A549 (cell line): ENCODE measurements at regions of chr17 and their contacts with region 1.

Region 1: DNA sequence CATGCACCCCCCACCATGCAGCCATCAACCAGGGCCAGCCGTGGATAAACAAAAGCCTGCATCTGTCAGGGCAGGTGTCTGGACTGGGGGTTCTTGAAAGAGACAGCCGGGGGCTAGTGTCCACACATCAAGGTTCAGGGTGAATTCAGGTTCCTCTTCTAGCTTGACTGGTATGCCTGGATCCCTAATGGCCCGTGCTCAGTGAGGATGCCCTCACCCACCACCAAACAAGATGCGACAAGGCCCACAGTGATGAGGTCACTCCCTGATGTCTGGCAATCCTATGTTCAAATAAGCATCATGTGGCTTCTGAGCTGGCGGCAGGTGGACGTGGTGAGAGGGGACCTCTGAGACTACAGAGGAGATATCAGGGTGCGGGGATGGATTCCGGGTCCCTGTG is 64.6 kb downstream of the GOSR1 start:
- DNase-seq: no peak
- ATAC-seq: no peak
- H3K4me3 ChIP-seq: no peak overlapping the region
- H3K27ac ChIP-seq: no peak overlapping the region
- H3K4me1 ChIP-seq: no peaks in the 10 kb centered on the region
- CTCF ChIP-seq: no peak
- EP300 ChIP-seq: no peak
- POLR2A ChIP-seq: no peak
- RAD21 ChIP-seq: no peak

Region 2: DNA sequence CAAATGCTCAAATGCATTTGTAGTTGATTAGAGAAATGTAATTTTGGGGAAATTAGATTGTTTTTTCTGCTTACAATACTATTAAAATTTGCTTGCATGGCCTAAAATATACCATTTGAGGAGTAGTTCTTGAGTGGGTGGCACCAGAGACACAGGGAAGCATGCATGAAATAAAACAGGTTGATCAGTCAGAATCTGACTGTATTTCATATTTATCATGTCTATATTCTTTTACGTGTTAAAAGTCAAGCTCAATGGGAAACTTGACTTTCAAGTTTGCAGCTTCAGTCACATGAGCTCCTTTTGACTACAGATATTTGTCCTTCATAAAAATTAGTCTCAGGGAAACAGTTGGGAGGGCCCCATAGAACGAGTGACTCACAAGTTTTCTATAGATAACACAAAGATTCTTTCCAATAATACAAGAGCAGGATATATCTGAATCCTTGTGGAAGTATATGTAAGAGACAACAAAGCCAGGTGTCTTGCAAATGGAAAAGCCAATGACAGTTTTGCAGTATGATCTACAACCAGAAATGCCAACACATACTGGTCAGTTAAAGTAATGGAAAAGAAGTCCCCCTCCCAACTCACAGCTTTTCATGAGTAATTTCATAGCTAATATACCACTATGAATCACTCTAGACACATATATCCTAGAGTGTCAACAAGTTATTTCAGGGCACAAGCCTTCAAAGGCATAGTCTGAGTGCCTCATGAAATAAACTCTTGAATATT is 876.9 kb before region 1 on chr17:
- CTCF ChIA-PET with region 1: no interaction called
- POLR2A ChIA-PET with region 1: no interaction called
- DNase-seq: peak; percentile 22 to 29
- ATAC-seq: peak in 1 of 2 experiments; percentile 75; a peak in 3 of 6 replicates
- H3K4me3 ChIP-seq: no peak overlapping the region
- H3K27ac ChIP-seq: 0 out of 6 replicates have a peak overlapping the region, but pooled peaks of 1 of the 2 experiments have one; percentile 12
- H3K4me1 ChIP-seq: peaks cover 30% of the 10 kb centered on the region
- CTCF ChIP-seq: no peak
- EP300 ChIP-seq: no peak
- POLR2A ChIP-seq: no peak
- RAD21 ChIP-seq: no peak

Region 3: GRCh38 chr17:30291543-30292285 is 250.1 kb before region 1 on chr17 and contains the start of gene BLMH:
- CTCF ChIA-PET with region 1: no interaction called
- POLR2A ChIA-PET with region 1: no interaction called
- DNase-seq: peak; percentile 79 to 80
- ATAC-seq: peak; percentile 86 to 93
- H3K4me3 ChIP-seq: peak within 1 kb of the TSS; percentile 80
- H3K27ac ChIP-seq: peak within 1 kb of the TSS; percentile 82 to 92
- H3K4me1 ChIP-seq: peaks cover 10% of the 10 kb centered on the region
- CTCF ChIP-seq: no peak
- EP300 ChIP-seq: no peak
- POLR2A ChIP-seq: peak; percentile 86
- RAD21 ChIP-seq: peak in 1 of 2 experiments; percentile 14; a peak in 1 of 5 replicates
- polyA plus RNA-seq, gene BLMH: 36.4 and 38.5 TPM in 2 replicates

Region 4: DNA sequence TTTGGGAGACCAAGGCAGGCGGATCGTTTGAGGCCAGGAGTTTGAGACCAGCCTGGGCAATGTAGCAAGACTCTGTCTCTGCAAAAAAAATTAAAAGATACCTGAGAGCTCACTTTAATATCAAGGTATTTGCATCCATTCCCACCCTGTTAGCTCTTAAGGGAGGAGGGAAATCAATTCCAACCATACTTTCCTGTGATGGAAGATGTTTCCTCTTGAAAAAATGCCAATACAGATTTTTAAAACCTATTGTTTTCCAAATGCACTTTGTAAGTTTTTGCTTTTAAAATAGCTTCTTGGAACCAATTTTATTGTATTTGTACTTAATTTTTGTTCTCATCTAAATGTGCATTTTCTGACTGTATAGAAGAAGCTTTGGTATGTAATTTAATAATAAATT is 15.4 kb before region 1 on chr17:
- CTCF ChIA-PET with region 1: interaction called, 10 read pairs
- POLR2A ChIA-PET with region 1: no interaction called
- DNase-seq: no peak
- ATAC-seq: no peak
- H3K4me3 ChIP-seq: no peak overlapping the region
- H3K27ac ChIP-seq: no peak overlapping the region
- H3K4me1 ChIP-seq: no peaks in the 10 kb centered on the region
- CTCF ChIP-seq: no peak
- EP300 ChIP-seq: no peak
- POLR2A ChIP-seq: no peak
- RAD21 ChIP-seq: no peak